Gastrocnemius medialis (tissue), 4 donors: ENCODE measurements at regions of chr5 and their contacts with region 1.

Region 1: DNA sequence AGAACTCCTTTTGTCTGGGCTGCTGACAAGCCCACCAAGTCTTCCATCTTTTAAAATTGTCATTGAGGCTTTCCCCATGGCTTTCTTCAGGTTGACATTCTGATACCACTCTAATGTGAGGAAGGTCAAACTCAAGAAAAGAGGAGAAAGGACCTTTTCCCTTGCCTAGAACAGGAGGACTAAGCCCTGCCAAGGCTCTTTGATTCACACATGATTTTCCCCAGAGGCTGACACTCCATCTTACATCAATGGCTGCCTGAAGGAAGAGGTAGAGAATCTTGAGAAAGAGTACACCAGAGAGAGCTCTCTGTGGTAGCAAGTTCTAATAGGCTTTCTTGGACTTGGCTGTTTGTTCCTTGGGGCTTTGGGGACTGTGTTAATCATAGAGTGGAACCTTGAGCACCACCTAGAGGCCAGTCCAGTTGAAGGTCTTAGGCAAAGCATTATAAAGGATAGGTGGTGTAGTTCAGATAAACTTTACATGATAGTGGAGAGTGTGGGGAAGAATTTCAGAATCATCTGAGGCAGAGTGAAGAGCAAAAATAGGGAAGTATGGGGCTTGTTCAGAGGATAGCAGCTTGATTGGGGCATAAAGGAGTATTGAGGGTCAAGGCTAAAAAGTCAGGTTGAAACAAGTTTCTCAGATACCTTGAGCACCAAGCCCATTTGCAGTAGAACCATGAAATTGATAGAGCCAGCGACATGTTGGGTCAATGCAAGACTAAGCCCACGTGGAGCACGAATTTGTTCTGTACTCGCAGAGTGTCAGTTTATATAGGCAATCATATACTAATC is 36.7 kb downstream of the NDFIP1 start:
- DNase-seq: peak; percentile 32 to 54
- ATAC-seq: peak; percentile 80 to 89
- H3K4me3 ChIP-seq: no peak overlapping the region
- H3K27ac ChIP-seq: no peak overlapping the region
- H3K4me1 ChIP-seq: no peaks in the 10 kb centered on the region
- H3K27me3 ChIP-seq: no peaks in the 10 kb centered on the region
- CTCF ChIP-seq: peak; percentile 44 to 69 (median 55)
- POLR2A ChIP-seq: no peak

Region 2: DNA sequence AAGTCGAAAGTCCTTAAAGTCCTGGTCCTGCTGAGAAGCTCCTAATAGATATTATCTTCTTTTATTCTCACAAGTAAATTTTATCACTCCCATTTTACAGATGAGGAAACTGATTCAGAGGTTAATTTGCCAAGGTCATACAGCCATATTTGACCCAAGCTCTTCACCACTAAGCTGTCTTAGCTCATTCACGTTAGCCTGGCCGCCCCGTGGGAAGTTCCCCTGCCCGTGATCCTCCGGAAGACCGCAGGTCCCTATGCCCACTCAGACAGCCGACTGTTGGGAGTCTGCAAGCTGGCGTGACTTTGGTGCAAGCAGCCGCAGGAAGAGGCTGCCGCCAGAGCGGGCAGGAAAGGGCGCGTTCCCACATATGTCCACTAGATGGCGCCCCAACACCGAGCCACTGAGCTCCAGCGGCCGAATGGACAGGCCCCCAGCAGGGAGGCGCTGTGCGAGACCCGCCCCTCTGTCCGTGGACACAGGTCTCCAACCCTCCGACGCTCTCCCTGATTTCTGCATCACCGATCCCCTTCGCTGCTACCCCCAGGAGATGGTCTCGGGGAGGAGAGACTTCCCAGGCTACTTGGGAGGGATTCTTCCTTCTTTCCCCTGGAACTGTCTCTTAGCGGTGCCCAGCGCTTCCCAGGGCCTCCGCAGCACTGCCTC is 453.3 kb before region 1 on chr5:
- in situ Hi-C with region 1: loop called (anchors 25 kb)
- intact Hi-C with region 1: loop called (anchors 10 kb)
- DNase-seq: peak; percentile 48 to 69
- ATAC-seq: peak; percentile 88 to 96
- H3K4me3 ChIP-seq: peak overlapping the region in 3 of 4 donors; percentile 30 to 50 (median 43)
- H3K27ac ChIP-seq: no peak overlapping the region
- H3K4me1 ChIP-seq: peaks cover 0 to 4% of the 10 kb centered on the region in 2 donors
- H3K27me3 ChIP-seq: no peaks in the 10 kb centered on the region
- CTCF ChIP-seq: peak; percentile 94 to 99 (median 98)
- POLR2A ChIP-seq: no peak

Region 3: DNA sequence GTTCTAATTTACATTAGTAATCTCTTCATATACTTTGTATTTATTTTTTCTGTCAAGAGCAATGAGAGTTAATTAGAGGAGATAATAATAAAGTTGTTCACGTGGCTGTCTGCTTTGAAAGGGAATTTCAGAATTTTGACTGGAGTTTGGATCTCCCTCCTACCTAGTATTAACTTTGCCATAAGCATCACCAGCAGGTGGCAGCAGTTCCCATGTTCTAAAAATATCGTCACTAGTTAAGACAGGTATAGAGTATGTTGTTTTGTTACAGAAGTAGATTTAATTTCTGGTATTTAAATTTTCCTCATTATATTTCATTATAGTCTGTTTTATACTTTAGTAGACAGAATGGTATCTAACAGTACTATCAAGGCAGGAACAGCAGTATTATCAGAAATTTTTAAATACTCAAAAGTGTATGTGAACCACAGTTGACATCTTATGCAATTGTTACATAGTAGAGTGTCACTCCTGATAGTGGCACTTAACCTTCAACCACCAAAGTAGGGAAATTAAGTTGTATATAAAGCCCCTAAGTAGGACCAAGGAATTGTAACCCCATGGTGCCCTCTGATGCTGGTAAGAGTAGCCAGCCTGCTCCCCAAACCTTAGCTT is 152.8 kb before region 1 on chr5:
- in situ Hi-C with region 1: loop called in 3 of 4 experiments (anchors 5 to 10 kb)
- intact Hi-C with region 1: loop called (anchors 1 kb)
- DNase-seq: peak; percentile 36 to 65
- ATAC-seq: peak; percentile 83 to 86
- H3K4me3 ChIP-seq: no peak overlapping the region
- H3K27ac ChIP-seq: peak overlapping the region in 1 of 4 donors; percentile 18
- H3K4me1 ChIP-seq: peaks cover 0 to 5% of the 10 kb centered on the region in 2 donors
- H3K27me3 ChIP-seq: no peaks in the 10 kb centered on the region
- CTCF ChIP-seq: peak; percentile 58 to 84 (median 71)
- POLR2A ChIP-seq: no peak

Region 4: GRCh38 chr5:142000703-142001484 is 144.4 kb before region 1 on chr5:
- in situ Hi-C with region 1: loop called in 3 of 4 experiments (anchors 5 to 10 kb)
- intact Hi-C with region 1: no loop called
- DNase-seq: no peak
- ATAC-seq: peak in 1 of 2 donors; percentile 50
- H3K4me3 ChIP-seq: no peak overlapping the region
- H3K27ac ChIP-seq: peak overlapping the region in 1 of 4 donors; percentile 16
- H3K4me1 ChIP-seq: no peaks in the 10 kb centered on the region
- H3K27me3 ChIP-seq: no peaks in the 10 kb centered on the region
- CTCF ChIP-seq: peak in 2 of 5 experiments; percentile 12 to 42
- POLR2A ChIP-seq: no peak

Region 5: DNA sequence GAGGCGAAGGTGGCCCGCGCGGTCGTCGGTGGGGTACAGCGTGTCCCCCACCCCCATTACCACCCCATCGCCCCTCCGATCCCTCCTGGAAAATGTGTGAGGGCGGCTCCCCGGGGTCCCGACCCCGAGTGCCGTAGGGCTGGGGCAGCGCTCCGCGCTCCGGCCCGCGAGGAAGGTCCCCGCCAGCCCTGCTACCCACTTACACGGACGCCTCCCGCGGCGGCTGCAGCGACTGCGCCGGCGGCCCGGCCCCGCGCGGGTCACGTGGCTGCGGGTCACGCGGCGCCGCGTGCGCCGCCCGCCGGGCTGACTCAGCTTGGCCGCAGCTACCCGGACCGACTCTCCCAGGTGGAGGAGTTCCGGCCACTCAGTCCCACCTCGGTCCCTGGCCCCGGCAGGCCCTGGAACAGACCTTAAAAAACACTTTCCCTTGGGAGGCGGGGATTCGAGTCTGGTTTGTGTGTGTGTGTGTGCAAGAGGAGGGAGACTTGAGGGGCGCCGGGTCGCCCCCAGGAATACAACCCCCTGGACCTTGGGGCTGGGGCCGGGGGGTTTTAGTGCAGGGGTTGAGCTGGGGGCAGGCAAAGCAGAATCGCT is 132.4 kb before region 1 on chr5 and contains the start of gene GNPDA1:
- in situ Hi-C with region 1: no loop called
- intact Hi-C with region 1: loop called (anchors 5 kb)
- DNase-seq: peak; percentile 76 to 85
- ATAC-seq: peak; percentile 84 to 89
- H3K4me3 ChIP-seq: peak within 1 kb of the TSS; percentile 74 to 91 (median 83)
- H3K27ac ChIP-seq: peak within 1 kb of the TSS; percentile 91 to 99 (median 98)
- H3K4me1 ChIP-seq: peaks cover 15 to 19% of the 10 kb centered on the region in 2 donors
- H3K27me3 ChIP-seq: no peaks in the 10 kb centered on the region
- CTCF ChIP-seq: peak in 4 of 5 experiments; percentile 19 to 52 (median 38)
- POLR2A ChIP-seq: peak; percentile 86 to 93
- total RNA-seq, gene GNPDA1: 22.3 to 50.0 (median 47.3) TPM

Region 6: GRCh38 chr5:142108432-142109330 is 36.6 kb before region 1 on chr5 and contains the start of gene NDFIP1:
- in situ Hi-C with region 1: no loop called
- intact Hi-C with region 1: loop called (anchors 5 kb)
- DNase-seq: peak; percentile 68 to 81
- ATAC-seq: peak; percentile 90
- H3K4me3 ChIP-seq: peak within 1 kb of the TSS; percentile 64 to 86 (median 70)
- H3K27ac ChIP-seq: peak within 1 kb of the TSS; percentile 83 to 98 (median 96)
- H3K4me1 ChIP-seq: peaks cover 25 to 32% of the 10 kb centered on the region in 2 donors
- H3K27me3 ChIP-seq: no peaks in the 10 kb centered on the region
- CTCF ChIP-seq: peak in 2 of 5 experiments; percentile 11 to 30
- POLR2A ChIP-seq: peak; percentile 91 to 92
- total RNA-seq, gene NDFIP1: 37.1 to 63.5 (median 42.5) TPM